Activated naive CD4-positive, alpha-beta T cell treated with anti-CD3 and anti-CD28 coated beads for 36 hours (primary cell): ENCODE measurements at regions of chr10 and their contacts with region 1.

Region 1: DNA sequence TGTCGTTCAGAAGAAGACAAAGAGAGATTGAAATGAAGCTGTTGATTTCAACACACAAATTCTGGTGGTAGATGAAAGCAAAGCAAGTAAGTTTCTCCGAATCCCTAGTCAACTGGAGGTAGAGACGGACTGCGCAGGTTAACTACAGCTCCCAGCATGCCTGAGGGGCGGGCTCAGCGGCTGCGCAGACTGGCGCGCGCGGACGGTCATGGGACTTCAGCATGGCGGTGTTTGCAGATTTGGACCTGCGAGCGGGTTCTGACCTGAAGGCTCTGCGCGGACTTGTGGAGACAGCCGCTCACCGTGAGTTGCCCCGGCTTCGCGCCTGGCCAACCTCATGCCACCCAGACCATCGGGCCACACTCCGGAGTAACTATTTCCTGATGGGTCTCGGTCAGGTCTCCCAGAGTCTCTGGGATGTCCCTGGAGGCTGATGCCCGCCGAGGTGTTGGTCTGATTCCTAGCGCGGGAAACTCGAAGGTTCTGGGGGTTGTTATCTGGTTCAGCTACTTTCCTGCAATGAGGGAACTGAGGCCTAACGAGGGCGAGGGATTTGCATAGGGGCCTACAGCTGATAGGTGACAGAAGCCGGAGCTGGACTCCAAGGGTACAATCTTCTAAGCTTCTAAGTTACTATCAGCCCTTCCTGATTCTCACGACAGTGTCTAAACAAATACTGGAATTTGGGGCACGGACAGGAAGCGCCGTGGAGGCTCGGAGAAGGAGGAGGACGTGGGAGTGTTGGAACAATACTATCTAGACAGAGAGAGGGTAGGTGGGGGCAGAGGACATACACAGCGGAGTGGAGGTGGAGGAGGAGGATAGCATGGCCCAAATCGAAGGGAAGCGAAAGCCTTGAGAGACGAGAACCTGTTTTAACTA is at the start of gene RPP30:
- DNase-seq: peak; percentile 89
- H3K4me3 Mint-ChIP-seq: peak within 1 kb of the TSS; percentile 96
- H3K27ac Mint-ChIP-seq: peak within 1 kb of the TSS; percentile 90
- H3K4me1 Mint-ChIP-seq: peaks cover 24% of the 10 kb centered on the region
- H3K27me3 Mint-ChIP-seq: peaks cover 14% of the 10 kb centered on the region
- total RNA-seq, gene RPP30: 74.7 to 75.8 TPM

Region 2: DNA sequence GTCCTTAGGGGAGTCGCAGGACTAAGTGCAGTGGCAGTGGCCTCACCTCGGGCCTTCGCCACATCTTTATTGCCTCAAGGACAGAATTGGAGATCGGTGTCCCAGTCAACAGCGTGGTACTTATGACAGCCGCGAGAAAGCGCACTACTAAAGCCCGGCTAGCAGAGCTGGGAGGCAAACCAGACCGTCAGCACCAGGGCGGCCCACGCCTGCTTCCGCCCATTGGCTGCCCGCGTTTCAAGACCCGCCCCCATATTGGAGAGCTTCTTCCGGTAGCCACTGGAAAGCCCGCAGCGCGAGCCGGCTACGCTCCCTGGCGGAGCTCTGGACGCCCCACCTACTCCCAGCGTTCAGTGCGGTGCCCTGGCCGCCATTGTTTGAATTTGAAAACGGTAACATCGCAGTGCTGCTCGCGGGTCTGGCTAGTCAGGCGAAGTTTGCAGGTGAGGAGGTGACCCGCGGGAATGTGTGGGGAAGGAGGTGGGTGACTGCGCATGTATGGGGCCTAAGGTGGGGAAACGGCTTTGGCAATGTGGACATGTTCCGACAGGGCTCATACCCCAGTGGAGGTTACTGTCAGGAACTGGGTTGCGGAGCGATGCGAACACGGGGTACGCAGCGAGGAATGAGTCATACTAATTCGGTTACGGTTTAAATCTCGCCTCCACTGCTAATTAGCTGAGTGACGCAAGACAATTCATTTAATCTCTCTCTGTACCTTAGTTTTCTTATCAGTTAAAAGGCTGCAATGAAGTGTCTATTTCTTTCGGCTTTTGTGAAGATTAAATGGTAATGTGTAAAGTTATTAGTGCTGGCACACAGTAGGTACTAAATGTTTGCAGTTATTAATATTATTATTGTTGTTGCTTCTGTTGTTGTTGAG is 1170.5 kb before region 1 on chr10 and contains the start of gene KIF20B:
- CTCF ChIA-PET with region 1: no interaction called
- intact Hi-C with region 1: loop called (anchors 1 kb)
- DNase-seq: peak; percentile 97
- H3K4me3 Mint-ChIP-seq: peak within 1 kb of the TSS; percentile 90
- H3K27ac Mint-ChIP-seq: peak within 1 kb of the TSS; percentile 97
- H3K4me1 Mint-ChIP-seq: peaks cover 34% of the 10 kb centered on the region
- H3K27me3 Mint-ChIP-seq: no peaks in the 10 kb centered on the region
- total RNA-seq, gene KIF20B: 67.2 to 70.3 TPM

Region 3: GRCh38 chr10:89861584-89862301 is 1010.3 kb before region 1 on chr10:
- CTCF ChIA-PET with region 1: no interaction called
- intact Hi-C with region 1: loop called (anchors 2 kb)
- DNase-seq: peak; percentile 69
- H3K4me3 Mint-ChIP-seq: no peak overlapping the region
- H3K27ac Mint-ChIP-seq: peak overlapping the region; percentile 83
- H3K4me1 Mint-ChIP-seq: peaks cover 27% of the 10 kb centered on the region
- H3K27me3 Mint-ChIP-seq: no peaks in the 10 kb centered on the region

Region 4: DNA sequence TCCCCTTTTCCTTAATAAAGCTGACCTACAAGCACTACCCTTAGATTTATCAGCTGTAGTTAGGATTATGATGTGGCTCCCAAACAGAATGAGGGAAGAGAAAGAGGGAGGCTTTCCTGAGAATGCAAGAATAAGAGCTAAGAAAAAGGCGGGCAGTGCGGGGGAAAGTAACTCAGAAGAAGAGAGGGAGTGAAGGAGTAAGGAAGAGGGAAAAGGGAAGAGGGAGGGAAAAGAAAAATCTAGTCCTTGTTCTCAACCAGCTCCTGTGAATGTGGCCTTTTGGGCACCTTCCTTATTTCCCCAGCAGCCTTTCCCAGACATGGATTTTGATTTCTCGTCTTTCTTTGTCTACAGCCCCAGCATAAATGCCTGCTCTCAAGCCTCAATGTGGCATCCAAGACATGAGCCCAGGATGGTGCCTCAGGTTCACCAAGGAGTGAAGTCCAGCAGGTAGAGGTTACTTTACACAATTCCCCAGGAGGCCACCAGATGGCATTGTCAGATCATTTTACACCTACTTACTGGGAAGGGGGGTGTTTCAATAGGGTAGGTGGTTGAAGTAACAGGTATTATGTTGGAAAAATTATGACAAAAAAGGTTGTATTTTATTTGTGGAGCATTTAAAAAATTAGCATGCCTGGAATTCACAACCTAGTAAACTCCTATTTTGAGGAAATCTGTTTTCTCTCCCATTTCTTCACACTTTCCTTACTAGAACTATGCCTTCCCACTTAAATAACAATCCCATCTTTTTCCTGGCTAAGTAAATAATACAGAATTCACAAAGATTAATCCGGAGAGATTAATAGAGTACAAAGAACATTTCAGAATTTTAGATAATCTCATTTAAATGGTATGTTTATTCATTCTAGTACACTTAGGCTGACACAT is 120.7 kb before region 1 on chr10:
- CTCF ChIA-PET with region 1: interaction called, 4 read pairs
- intact Hi-C with region 1: loop called (anchors 1 kb)
- DNase-seq: peak; percentile 68
- H3K4me3 Mint-ChIP-seq: no peak overlapping the region
- H3K27ac Mint-ChIP-seq: no peak overlapping the region
- H3K4me1 Mint-ChIP-seq: no peaks in the 10 kb centered on the region
- H3K27me3 Mint-ChIP-seq: peaks cover 26% of the 10 kb centered on the region

Region 5: GRCh38 chr10:90798482-90798881 is 73.5 kb before region 1 on chr10:
- CTCF ChIA-PET with region 1: no interaction called
- intact Hi-C with region 1: no loop called
- DNase-seq: no peak
- H3K4me3 Mint-ChIP-seq: no peak overlapping the region
- H3K27ac Mint-ChIP-seq: no peak overlapping the region
- H3K4me1 Mint-ChIP-seq: no peaks in the 10 kb centered on the region
- H3K27me3 Mint-ChIP-seq: peaks cover 14% of the 10 kb centered on the region

Region 6: DNA sequence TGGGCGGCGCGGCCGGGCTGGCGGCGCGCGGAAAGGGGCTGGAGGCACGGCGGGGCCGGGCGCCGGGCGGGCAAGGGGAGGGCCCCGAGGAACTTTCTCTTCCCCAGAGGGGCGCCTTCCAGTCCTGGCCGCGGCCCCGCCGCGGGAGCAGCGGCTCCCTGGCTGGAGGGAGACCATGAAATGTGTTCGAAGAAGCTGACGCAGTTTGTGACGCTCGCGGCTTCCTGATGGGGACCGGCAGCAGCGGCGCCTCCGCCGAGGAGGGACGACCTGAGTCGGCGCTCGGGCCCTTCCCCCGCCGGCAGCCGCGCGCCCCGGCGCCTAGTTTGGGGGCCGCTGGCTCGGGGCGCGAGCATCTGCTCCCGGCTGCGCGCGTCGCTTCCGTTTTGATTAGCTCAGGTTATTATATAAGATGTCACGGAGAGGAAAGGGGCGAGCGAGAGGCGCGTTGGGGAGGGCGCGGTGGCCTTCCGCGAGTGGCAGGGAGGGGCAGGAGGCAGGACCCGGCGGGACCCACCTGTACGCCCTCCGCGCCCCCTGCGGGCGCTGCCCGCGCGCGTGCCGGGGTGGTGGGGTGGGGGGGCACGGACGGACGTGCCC is 291.4 kb after region 1 on chr10:
- CTCF ChIA-PET with region 1: no interaction called
- intact Hi-C with region 1: loop called (anchors 5 kb)
- DNase-seq: peak; percentile 75
- H3K4me3 Mint-ChIP-seq: peak overlapping the region; percentile 80
- H3K27ac Mint-ChIP-seq: peak overlapping the region; percentile 78
- H3K4me1 Mint-ChIP-seq: peaks cover 33% of the 10 kb centered on the region
- H3K27me3 Mint-ChIP-seq: no peaks in the 10 kb centered on the region

Region 7: DNA sequence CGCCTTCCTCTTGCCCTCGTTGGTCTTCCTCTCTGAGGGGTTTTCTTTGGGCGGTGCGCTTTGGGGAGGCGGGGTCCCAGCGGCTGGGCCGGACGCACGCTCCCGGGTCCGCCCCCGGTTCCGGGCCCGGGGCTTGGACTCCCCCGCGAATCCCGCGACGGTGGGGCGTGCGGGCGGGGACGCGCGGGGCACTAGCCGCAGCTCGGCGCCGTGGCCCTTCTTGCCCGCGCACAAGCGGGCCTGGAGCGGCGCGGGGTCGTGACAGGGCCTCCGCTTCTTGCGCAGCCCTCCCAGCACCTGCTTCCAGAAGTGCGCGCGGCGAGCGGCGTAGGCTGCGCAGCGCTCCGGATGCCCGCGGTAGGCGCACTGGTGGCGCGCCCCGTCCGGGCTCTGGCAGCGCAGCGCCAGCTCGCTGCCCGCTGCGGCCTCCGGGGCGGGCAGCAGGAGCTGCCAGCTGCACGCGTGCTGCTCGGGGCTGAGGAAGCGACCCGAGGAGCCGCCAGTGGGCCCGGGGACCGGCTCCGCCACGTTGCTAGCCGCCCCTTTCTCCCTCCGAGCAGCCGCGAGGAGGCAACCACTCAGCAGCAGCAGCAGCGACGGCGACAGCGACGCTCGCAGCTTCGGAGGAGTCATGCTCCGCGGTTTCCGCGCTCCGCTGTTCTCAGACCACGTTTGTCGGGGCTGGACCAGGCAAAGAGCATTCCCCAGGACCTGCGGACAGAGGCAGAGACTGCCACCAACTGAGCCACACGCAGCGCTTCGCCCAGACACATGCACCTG is 1036.5 kb after region 1 on chr10:
- CTCF ChIA-PET with region 1: no interaction called
- intact Hi-C with region 1: loop called (anchors 10 kb)
- DNase-seq: peak; percentile 77
- H3K4me3 Mint-ChIP-seq: peak overlapping the region; percentile 90
- H3K27ac Mint-ChIP-seq: peak overlapping the region; percentile 74
- H3K4me1 Mint-ChIP-seq: peaks cover 20% of the 10 kb centered on the region
- H3K27me3 Mint-ChIP-seq: peaks cover 7% of the 10 kb centered on the region